PC-3 (cell line): ENCODE measurements at regions of chr1 and their contacts with region 1.

Region 1: DNA sequence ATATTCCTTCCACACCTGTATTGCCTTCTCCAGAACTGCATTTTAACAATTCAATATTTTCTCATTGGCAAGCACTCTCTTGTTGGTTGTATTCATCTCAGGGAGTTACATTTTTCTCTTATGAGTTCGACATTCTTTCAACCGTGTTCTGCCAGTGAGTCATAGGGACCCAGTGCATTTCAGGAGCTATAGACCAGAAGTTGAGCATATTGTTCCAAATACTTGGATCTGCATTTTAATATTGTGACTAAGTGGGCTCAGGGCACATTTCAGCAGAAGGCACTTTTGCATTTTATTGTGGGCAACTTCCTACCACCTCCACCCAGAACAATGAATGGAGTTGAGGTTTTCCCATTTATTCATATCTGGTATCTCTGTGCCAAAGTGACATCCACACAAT is 132.8 kb downstream of the TNFSF18 start:
- DNase-seq: peak; percentile 100
- ATAC-seq: peak; percentile 89
- H3K4me3 ChIP-seq: peak overlapping the region; percentile 4; the same call in 1 of the 2 replicates
- H3K27ac ChIP-seq: peak overlapping the region; percentile 72
- H3K4me1 ChIP-seq: peaks cover 63% of the 10 kb centered on the region
- H3K27me3 ChIP-seq: no peaks in the 10 kb centered on the region
- CTCF ChIP-seq: no peak

Region 2: DNA sequence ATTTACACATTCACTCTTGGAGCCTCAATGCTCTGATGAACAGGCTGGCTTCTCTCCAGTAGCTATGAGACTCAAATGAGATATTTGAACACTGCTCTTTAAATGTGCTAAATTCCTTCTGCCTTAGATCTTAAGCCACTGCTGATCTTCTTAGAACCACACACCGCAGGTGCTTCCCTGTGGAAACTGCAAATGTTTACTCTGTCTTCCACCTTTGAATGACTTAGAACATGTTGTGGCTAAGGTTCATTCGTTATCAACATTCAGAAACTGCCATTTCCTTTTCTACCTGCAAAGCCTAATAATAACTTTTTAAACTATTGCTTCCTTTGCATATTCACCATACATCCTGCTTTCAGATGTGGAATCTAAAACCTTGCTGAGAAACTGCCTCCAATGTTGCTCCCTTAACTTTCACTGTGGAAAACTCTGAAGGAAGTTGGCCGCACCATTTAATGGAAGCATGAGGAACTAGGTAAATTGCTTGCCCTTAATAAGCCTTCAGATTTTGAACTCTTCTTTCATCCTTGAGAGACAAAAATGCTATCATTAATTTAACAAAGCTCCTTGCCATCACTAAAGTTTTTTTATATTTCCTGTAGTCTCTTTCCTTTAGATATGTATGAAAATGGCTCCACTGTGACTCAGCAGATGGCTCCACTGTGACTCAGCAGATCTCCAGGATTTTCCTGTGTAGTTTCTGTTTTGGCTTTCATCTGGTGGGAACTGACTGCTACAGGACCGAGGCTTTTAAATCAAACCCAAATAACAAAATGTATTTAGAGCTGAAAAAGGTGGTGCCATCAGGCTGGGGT is 11.0 kb before region 1 on chr1:
- CTCF ChIA-PET with region 1: no interaction called
- POLR2A ChIA-PET with region 1: interaction called, 6 read pairs
- intact Hi-C with region 1: loop called (anchors 1 kb)
- DNase-seq: peak; percentile 99
- ATAC-seq: peak; percentile 25
- H3K4me3 ChIP-seq: no peak overlapping the region; the same call in 1 of the 2 replicates
- H3K27ac ChIP-seq: peak overlapping the region; percentile 77
- H3K4me1 ChIP-seq: peaks cover 64% of the 10 kb centered on the region
- H3K27me3 ChIP-seq: no peaks in the 10 kb centered on the region
- CTCF ChIP-seq: no peak

Region 3: DNA sequence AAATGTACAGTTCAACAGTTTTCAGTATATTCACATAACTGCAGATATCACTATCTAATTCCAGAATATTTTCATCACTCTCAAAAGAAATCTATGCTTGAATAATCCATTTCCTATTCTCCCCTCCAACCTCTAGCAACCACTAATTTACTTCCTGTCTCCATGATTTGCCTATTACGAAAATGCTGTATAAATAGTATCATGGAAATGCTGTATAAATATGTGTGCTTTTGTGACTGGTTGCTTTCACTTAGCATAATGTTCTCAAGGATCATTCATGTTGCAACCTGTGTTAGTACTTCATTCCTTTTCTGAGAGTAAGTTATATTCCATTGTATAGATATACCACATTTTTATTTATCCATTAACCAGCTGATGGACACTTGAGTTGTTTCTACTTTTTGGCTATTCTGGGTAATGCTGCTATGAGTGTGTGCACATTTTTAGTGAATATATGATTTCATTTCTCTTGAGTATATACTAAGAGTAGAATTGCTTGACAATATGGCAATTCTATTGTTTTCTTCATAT is 17.2 kb after region 1 on chr1:
- CTCF ChIA-PET with region 1: no interaction called
- POLR2A ChIA-PET with region 1: no interaction called
- intact Hi-C with region 1: loop called (anchors 1 kb)
- DNase-seq: no peak
- ATAC-seq: no peak
- H3K4me3 ChIP-seq: no peak overlapping the region
- H3K27ac ChIP-seq: peak overlapping the region; percentile 70
- H3K4me1 ChIP-seq: peaks cover 34% of the 10 kb centered on the region
- H3K27me3 ChIP-seq: no peaks in the 10 kb centered on the region
- CTCF ChIP-seq: no peak

Region 4: DNA sequence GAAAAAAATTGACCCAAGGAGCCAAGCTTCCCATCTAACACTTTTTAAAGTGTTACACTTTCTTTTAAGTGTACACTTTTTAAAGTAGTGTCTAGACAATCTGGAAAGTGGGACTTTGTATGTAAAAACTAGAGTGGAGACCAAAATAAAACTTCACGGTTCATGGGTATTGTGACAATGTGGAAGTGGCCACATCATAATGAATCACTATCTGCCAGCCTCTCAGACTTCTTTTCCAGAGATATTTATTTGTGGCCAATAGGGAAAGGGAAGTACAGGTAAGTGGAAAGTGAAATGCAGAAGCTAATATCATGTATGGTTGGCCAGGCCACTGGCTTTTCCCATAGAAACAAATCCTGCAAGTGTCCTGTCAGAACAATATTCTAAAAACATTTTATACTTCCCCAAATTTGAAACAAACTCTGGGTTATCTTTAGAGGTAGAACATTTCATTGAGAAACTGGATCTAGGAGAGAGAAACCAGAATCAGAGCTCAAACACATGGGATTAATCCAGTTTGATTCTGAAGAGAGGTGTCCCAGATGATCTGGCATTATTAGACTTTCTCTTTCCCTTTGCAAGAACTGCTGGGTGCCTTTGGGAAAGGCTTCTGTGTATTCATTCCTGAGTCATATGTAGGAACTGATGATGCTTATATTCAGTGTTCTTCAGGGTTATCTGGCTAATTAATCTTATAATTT is 130.8 kb after region 1 on chr1:
- CTCF ChIA-PET with region 1: no interaction called
- POLR2A ChIA-PET with region 1: no interaction called
- intact Hi-C with region 1: loop called (anchors 1 kb)
- DNase-seq: peak; percentile 98
- ATAC-seq: peak; percentile 85
- H3K4me3 ChIP-seq: no peak overlapping the region
- H3K27ac ChIP-seq: peak overlapping the region; percentile 51
- H3K4me1 ChIP-seq: peaks cover 55% of the 10 kb centered on the region
- H3K27me3 ChIP-seq: no peaks in the 10 kb centered on the region
- CTCF ChIP-seq: no peak

Region 5: GRCh38 chr1:173095632-173096031 is 177.7 kb after region 1 on chr1:
- CTCF ChIA-PET with region 1: no interaction called
- POLR2A ChIA-PET with region 1: no interaction called
- intact Hi-C with region 1: loop called (anchors 5 kb)
- DNase-seq: peak; percentile 98
- ATAC-seq: peak; percentile 97
- H3K4me3 ChIP-seq: no peak overlapping the region
- H3K27ac ChIP-seq: no peak overlapping the region
- H3K4me1 ChIP-seq: peaks cover 23% of the 10 kb centered on the region
- H3K27me3 ChIP-seq: no peaks in the 10 kb centered on the region
- CTCF ChIP-seq: no peak

Region 6: DNA sequence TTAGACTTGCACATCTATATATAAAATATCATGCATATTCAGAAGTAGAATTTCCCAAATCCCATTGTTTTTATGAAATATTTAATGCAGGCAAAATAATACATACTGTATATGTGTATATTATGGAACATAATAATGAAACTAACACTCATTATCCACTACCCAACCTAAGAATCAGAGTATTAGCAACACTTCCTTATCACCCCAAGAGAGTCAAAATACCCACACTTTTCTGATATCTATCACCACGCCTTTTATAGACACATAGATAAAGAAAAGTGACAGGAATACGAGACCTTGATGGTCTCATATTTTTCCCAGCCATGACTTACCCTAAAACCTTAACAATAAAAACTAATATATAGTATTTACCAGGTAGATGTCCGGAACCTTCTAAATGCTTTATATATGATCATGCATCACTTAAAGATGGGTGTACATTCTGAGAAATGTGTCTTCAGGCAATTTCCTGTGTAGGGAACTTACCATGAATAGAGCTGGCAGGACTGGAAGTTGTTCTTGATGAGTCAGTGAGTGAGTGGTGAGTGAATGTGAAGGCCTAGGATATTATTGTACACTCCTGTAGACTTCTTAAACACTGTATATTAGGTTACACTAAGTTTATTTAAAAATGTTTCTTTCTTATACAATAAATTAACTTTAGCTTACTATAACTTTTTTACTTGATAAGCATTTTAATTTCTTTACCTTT is 243.7 kb after region 1 on chr1:
- CTCF ChIA-PET with region 1: no interaction called
- POLR2A ChIA-PET with region 1: no interaction called
- intact Hi-C with region 1: loop called (anchors 2 kb)
- DNase-seq: peak; percentile 100
- ATAC-seq: peak; percentile 100
- H3K4me3 ChIP-seq: no peak overlapping the region
- H3K27ac ChIP-seq: peak overlapping the region; percentile 49
- H3K4me1 ChIP-seq: peaks cover 21% of the 10 kb centered on the region
- H3K27me3 ChIP-seq: no peaks in the 10 kb centered on the region
- CTCF ChIP-seq: no peak